ENCODE measurements at regions of chr22 and their contacts with region 1.

Region 1: GRCh38 chr22:39319270-39320022 is at the start of gene RPL3:
- DNase-seq: peak; percentile 100
- ATAC-seq: peak; percentile 86
- H3K4me3 ChIP-seq: peak within 1 kb of the TSS; percentile 80 to 99 (median 85)
- H3K4me3 Mint-ChIP-seq: peak within 1 kb of the TSS; percentile 99
- H3K27ac ChIP-seq: peak within 1 kb of the TSS; percentile 90 to 95
- H3K27ac Mint-ChIP-seq: peak within 1 kb of the TSS; percentile 98
- H3K4me1 ChIP-seq: peaks cover 27 to 38% of the 10 kb centered on the region in 2 donors
- H3K4me1 Mint-ChIP-seq: peaks cover 38% of the 10 kb centered on the region
- H3K27me3 ChIP-seq: no peaks in the 10 kb centered on the region
- H3K27me3 Mint-ChIP-seq: no peaks in the 10 kb centered on the region
- CTCF ChIP-seq: no peak
- total RNA-seq, gene RPL3: 2,562 and 2,665 TPM in 2 replicates

Region 2: DNA sequence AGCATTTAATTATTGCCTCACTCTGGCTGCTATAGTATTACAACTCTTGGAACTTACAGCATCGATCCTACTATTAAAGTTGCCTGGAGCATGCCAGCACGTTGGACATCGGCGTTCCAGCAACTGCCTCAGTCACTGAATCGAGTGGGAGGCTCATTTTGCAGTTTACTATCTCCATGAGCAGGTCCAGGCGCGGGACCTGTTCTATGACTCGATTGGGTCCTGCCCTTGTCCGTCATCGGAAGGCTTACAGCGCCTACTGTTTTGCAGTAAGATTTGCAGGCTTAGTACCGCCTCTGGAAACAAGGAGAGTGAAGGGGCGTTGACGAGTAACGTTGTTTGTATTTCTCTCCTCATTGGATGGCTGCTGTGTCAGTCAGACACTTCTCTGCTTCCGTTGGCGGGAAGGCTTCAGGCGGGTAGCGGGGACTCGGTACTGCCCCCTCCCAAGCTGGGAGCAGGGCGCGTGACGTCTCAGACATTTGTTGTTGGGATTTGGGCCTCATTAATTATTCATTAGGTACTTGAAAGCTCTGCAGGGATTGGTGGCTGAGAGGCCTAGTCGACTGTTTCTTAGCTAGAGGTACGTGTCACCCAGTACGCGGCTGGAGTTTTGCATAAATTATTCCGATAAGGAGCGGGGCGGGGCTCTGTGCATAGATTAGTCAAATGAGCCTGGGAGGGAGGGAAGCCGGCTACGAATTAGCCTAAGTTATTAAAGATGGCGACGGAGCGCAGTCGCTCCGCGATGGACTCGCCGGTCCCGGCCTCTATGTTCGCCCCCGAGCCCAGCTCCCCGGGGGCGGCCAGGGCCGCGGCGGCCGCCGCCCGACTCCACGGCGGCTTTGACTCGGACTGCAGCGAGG is 614.0 kb before region 1 on chr22 and contains the start of gene GTPBP1:
- CTCF ChIA-PET with region 1: interaction called, 3 read pairs
- POLR2A ChIA-PET with region 1: no interaction called
- intact Hi-C with region 1: loop called (anchors 5 kb)
- DNase-seq: peak; percentile 100
- ATAC-seq: peak; percentile 75
- H3K4me3 ChIP-seq: peak within 1 kb of the TSS; percentile 64 to 93 (median 88)
- H3K4me3 Mint-ChIP-seq: peak within 1 kb of the TSS; percentile 94
- H3K27ac ChIP-seq: peak within 1 kb of the TSS; percentile 83 to 91
- H3K27ac Mint-ChIP-seq: peak within 1 kb of the TSS; percentile 98
- H3K4me1 ChIP-seq: peaks cover 51 to 54% of the 10 kb centered on the region in 2 donors
- H3K4me1 Mint-ChIP-seq: peaks cover 65% of the 10 kb centered on the region
- H3K27me3 ChIP-seq: no peaks in the 10 kb centered on the region
- H3K27me3 Mint-ChIP-seq: no peaks in the 10 kb centered on the region
- CTCF ChIP-seq: peak; percentile 26
- total RNA-seq, gene GTPBP1: 174 and 175 TPM in 2 replicates

Region 3: GRCh38 chr22:39003165-39003638 is 316.2 kb before region 1 on chr22:
- CTCF ChIA-PET with region 1: interaction called, 14 read pairs
- POLR2A ChIA-PET with region 1: interaction called, 4 read pairs
- intact Hi-C with region 1: no loop called
- DNase-seq: peak; percentile 84
- ATAC-seq: peak; percentile 93
- H3K4me3 ChIP-seq: no peak overlapping the region
- H3K4me3 Mint-ChIP-seq: no peak overlapping the region
- H3K27ac ChIP-seq: no peak overlapping the region
- H3K27ac Mint-ChIP-seq: peak overlapping the region; percentile 27
- H3K4me1 ChIP-seq: peaks cover 7 to 12% of the 10 kb centered on the region in 2 donors
- H3K4me1 Mint-ChIP-seq: peaks cover 13% of the 10 kb centered on the region
- H3K27me3 ChIP-seq: no peaks in the 10 kb centered on the region
- H3K27me3 Mint-ChIP-seq: peaks cover 2% of the 10 kb centered on the region
- CTCF ChIP-seq: peak; percentile 80

Region 4: DNA sequence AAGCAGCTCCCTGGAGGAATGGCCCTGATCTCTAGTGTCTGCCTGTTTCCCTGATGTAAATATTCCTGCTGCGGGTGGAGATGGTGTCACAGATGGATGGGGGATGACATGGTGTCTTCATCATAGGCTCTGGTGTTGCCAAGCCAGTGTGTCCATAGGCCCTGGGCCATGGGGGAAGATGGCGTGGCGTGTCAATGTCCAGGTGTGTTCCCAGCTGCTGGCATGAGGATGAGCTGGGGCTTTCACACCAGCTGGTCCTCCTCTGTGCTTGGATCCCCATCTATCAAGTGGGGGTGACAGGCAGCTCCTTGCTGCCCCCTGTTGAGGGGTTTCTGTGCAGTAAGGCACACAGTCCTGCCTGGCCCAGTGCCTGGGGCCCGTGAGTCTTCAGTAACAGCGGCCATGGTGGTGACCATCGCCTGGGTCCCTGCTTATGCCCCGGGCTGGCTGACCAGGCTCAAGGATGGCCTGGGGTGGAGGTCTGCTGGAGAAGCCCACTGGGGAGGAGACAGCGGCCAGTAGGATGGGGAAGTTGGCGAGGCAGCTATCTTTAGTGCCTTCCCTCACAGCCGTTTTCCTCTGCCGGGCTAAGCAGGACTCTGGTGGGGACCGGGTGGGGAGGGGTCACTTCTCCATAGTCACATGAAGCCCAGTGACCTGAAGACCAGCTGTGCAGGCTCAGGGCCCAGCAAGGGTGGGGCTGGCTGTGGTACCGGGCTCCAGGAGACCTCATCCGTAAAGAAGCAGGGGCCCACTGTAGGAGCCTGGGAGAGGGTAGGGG is 12.7 kb before region 1 on chr22:
- CTCF ChIA-PET with region 1: interaction called, 13 read pairs
- POLR2A ChIA-PET with region 1: interaction called, 7 read pairs
- intact Hi-C with region 1: no loop called
- DNase-seq: peak; percentile 54
- ATAC-seq: no peak
- H3K4me3 ChIP-seq: no peak overlapping the region
- H3K4me3 Mint-ChIP-seq: no peak overlapping the region
- H3K27ac ChIP-seq: no peak overlapping the region
- H3K27ac Mint-ChIP-seq: no peak overlapping the region
- H3K4me1 ChIP-seq: peaks cover 0 to 18% of the 10 kb centered on the region in 2 donors
- H3K4me1 Mint-ChIP-seq: peaks cover 15% of the 10 kb centered on the region
- H3K27me3 ChIP-seq: no peaks in the 10 kb centered on the region
- H3K27me3 Mint-ChIP-seq: no peaks in the 10 kb centered on the region
- CTCF ChIP-seq: peak; percentile 28

Region 5: DNA sequence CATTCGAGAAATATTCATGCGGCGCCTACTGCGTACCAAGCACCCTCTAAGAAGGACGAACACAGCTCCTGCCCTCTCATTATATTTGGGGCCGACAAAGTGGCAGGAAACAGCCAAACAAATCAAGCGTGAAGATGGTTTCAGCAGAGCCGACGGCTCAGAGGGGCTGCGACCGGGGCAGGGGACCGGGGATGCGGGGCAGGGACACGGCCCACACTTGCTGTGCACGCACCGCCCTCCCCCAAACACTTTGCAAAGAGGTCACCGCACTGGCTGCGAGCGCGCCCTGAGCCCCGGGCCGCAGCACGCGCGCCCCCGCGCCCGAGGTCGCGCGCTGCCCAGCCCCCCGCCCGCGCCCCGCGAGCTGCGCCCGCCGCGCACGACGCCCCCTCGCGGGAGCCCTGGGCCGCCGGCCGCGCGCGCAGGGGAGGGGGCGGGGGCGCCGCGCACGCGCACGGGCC is 30.1 kb after region 1 on chr22:
- CTCF ChIA-PET with region 1: interaction called, 9 read pairs
- POLR2A ChIA-PET with region 1: interaction called, 40 read pairs
- intact Hi-C with region 1: loop called (anchors 1 kb)
- DNase-seq: peak; percentile 73
- ATAC-seq: peak; percentile 21
- H3K4me3 ChIP-seq: peak overlapping the region; percentile 66 to 83 (median 69)
- H3K4me3 Mint-ChIP-seq: peak overlapping the region; percentile 95
- H3K27ac ChIP-seq: peak overlapping the region; percentile 4 to 45
- H3K27ac Mint-ChIP-seq: peak overlapping the region; percentile 94
- H3K4me1 ChIP-seq: peaks cover 31 to 37% of the 10 kb centered on the region in 2 donors
- H3K4me1 Mint-ChIP-seq: peaks cover 35% of the 10 kb centered on the region
- H3K27me3 ChIP-seq: no peaks in the 10 kb centered on the region
- H3K27me3 Mint-ChIP-seq: no peaks in the 10 kb centered on the region
- CTCF ChIP-seq: no peak

Region 6: GRCh38 chr22:39478441-39479264 is 159.2 kb after region 1 on chr22:
- CTCF ChIA-PET with region 1: no interaction called
- POLR2A ChIA-PET with region 1: no interaction called
- intact Hi-C with region 1: no loop called
- DNase-seq: no peak
- ATAC-seq: no peak
- H3K4me3 ChIP-seq: no peak overlapping the region
- H3K4me3 Mint-ChIP-seq: no peak overlapping the region
- H3K27ac ChIP-seq: no peak overlapping the region
- H3K27ac Mint-ChIP-seq: no peak overlapping the region
- H3K4me1 ChIP-seq: no peaks in the 10 kb centered on the region
- H3K4me1 Mint-ChIP-seq: peaks cover 2% of the 10 kb centered on the region
- H3K27me3 ChIP-seq: no peaks in the 10 kb centered on the region
- H3K27me3 Mint-ChIP-seq: no peaks in the 10 kb centered on the region
- CTCF ChIP-seq: no peak

Region 7: DNA sequence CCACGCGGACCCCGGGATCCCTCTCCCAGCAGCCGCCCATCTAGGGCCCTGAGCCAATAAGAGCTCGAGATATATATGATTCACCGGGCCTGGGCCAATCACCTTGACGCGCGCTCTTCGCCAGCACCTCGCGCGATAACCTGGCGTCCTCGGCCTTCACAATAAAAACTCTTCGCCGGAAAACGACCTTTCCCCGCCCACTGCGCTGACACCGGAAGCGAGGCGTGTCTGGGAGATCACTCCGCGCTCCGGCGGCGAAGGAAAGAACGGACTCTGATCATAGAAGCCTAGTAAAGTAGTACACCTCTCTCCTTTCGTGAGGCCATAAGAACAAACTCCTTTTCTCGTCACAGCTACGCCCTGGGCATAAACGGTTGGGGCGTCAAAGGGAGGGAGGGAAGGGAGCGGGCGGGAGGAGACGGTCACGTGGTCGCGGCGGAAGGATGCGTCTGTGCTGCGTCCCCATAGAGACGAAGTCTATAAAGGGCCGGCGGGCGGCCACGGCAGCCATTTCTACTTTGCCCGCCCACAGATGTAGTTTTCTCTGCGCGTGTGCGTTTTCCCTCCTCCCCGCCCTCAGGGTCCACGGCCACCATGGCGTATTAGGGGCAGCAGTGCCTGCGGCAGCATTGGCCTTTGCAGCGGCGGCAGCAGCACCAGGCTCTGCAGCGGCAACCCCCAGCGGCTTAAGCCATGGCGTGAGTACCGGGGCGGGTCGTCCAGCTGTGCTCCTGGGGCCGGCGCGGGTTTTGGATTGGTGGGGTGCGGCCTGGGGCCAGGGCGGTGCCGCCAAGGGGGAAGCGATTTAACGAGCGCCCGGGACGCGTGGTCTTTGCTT is 200.8 kb after region 1 on chr22 and contains the start of gene ATF4:
- CTCF ChIA-PET with region 1: interaction called, 10 read pairs
- POLR2A ChIA-PET with region 1: interaction called, 30 read pairs
- intact Hi-C with region 1: loop called (anchors 1 kb)
- DNase-seq: peak; percentile 100
- ATAC-seq: peak; percentile 89
- H3K4me3 ChIP-seq: peak within 1 kb of the TSS; percentile 82 to 100 (median 99)
- H3K4me3 Mint-ChIP-seq: peak within 1 kb of the TSS; percentile 94
- H3K27ac ChIP-seq: peak within 1 kb of the TSS; percentile 91 to 95
- H3K27ac Mint-ChIP-seq: peak within 1 kb of the TSS; percentile 98
- H3K4me1 ChIP-seq: peaks cover 31 to 49% of the 10 kb centered on the region in 2 donors
- H3K4me1 Mint-ChIP-seq: peaks cover 59% of the 10 kb centered on the region
- H3K27me3 ChIP-seq: no peaks in the 10 kb centered on the region
- H3K27me3 Mint-ChIP-seq: no peaks in the 10 kb centered on the region
- CTCF ChIP-seq: no peak
- total RNA-seq, gene ATF4: 236 and 244 TPM in 2 replicates